ENCODE measurements at regions of chr12 and their contacts with region 1.

Region 1: DNA sequence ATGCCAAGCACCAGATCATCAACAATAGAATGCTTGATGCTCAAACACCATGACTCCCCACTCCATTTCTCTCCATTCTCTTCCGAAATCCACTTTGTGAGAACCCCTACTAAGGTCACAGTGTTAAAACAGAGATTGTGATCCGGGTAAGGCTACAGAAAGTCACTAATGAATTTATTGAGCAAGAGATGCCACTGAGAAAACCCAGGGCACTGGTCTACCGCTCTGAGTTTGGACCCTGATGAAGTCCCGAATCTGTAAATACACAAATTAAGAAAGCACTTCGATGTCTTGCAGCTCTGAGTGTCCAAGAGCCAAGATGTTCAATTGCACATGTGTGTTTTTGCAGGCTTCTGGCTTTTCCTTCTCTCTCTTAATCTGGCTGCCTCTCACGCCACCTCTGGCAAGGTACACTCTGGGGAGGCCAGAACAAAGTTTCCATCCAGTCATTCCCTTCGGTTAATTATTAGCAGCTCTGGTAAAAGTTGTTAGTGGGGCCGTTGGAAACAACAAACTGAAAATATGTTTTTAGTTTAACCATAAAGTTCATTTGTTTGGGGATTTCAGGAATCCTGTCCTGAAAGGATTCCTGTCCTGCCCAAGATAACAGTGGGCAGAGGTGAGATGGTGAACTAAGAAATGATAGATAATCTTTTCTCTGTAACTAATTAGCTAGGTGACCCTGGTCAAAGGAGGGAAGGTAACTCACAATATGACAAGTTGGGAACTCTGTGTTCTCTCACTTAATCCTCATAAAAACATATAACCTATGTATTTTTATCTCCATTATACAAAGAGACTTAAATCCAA is 75.4 kb downstream of the BTG1 start:
- DNase-seq: peak; percentile 80
- H3K4me3 Mint-ChIP-seq: peak overlapping the region; percentile 54
- H3K27ac Mint-ChIP-seq: peak overlapping the region; percentile 91
- H3K4me1 Mint-ChIP-seq: peaks cover 56% of the 10 kb centered on the region
- H3K27me3 Mint-ChIP-seq: no peaks in the 10 kb centered on the region
- CTCF ChIP-seq: peak; percentile 15

Region 2: GRCh38 chr12:91926848-91927247 is 143.4 kb before region 1 on chr12:
- CTCF ChIA-PET with region 1: no interaction called
- intact Hi-C with region 1: loop called (anchors 5 kb)
- DNase-seq: no peak
- H3K4me3 Mint-ChIP-seq: no peak overlapping the region
- H3K27ac Mint-ChIP-seq: peak overlapping the region; percentile 52
- H3K4me1 Mint-ChIP-seq: peaks cover 20% of the 10 kb centered on the region
- H3K27me3 Mint-ChIP-seq: no peaks in the 10 kb centered on the region
- CTCF ChIP-seq: no peak

Region 3: DNA sequence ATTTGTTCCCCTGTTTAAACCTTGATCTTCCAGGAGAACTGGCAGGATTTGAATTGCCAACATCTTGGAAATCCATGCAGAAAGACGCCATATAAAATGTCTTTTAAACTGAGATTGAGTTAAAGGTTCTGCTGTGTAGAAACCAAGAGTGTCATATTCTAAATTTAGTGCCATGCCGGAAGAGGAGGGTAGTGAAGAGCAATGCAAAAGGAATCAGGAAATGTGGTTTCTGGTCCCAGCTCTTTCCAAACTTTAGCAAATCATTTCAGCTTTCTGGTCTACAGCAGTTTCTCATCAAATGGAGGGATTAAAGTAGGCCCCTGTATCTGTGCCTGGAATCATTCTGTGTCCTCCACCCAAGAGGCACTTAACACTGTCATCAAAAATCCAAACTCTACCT is 10.3 kb before region 1 on chr12:
- CTCF ChIA-PET with region 1: no interaction called
- intact Hi-C with region 1: no loop called
- DNase-seq: no peak
- H3K4me3 Mint-ChIP-seq: no peak overlapping the region
- H3K27ac Mint-ChIP-seq: peak overlapping the region; percentile 35
- H3K4me1 Mint-ChIP-seq: peaks cover 61% of the 10 kb centered on the region
- H3K27me3 Mint-ChIP-seq: no peaks in the 10 kb centered on the region
- CTCF ChIP-seq: no peak

Region 4: DNA sequence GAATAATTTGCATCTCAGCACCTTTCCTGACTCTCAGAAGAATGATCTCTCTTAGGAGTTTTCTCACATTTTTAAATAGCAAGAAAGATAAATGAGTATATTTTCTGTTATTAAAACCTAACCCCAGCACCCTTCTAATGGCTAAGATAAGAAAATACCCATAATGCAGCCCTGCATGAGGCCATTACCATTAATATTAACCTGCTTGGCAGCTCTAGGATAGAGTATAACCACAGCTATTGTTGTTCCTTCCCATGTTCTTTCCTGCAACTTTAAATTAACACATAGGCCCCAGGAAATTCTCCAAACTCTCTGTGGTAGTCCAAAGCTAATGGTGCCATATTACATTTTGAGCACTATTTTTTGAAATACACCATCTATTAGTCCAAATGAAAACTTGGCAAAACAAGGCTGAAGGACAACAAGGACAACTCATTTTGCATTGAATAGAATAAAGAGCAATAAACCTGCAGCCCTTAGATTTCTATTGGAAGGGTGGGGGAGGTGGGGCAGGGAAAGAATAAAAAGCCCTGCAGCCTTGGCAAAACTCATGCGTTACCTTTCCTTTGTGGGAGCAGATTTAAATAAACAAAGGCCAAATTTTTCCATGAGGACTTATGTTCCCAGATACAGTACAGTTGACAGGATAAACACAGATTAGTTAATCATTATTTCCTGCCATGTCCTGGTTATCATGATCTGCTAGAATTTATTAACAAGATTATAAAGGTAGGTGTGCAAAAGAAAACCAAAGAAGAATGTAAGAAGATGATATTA is 28.5 kb after region 1 on chr12:
- CTCF ChIA-PET with region 1: interaction called, 3 read pairs
- intact Hi-C with region 1: loop called (anchors 2 kb)
- DNase-seq: no peak
- H3K4me3 Mint-ChIP-seq: no peak overlapping the region
- H3K27ac Mint-ChIP-seq: peak overlapping the region; percentile 8
- H3K4me1 Mint-ChIP-seq: peaks cover 65% of the 10 kb centered on the region
- H3K27me3 Mint-ChIP-seq: no peaks in the 10 kb centered on the region
- CTCF ChIP-seq: no peak

Measured in Calu3 (cell line).